GM12878 (cell line): ENCODE measurements at regions of chr16 and their contacts with region 1.

Region 1: DNA sequence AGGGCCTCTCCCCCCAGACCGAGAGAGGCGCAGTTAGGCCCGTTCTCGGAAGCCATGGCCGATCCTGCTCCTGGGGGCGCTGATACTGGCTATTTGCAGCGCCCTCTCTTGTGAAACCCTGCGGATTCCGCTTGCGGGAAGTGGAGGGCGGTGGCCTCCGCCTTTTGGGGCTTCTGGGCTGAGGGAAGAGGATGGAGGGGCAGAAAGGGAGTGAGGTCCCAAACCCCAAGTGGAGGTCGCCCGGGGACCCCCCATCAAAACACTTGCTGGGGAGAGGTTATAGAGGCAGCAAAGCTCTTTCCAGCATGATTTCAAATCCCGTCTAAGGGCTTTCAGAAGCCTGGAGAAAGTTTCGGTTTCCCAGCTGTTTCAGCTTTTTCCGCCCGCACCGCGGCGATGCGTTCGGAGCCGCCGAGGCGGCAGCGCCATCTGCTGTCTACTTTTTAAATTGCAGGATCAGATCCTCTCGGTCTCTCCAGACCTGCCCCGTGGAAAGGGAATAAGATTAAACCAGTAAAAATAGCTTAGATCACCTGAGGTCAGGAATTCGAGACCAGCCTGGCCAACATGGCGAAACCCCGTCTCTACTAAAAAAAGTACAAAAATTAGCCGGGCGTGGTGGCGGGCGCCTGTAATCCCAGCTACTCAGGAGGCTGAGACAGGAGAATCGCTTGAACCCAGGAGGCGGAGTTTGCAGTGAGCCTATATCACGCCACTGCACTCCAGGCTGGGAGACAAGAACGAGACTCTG is 15.8 kb downstream of the SNX20 start:
- DNase-seq: no peak
- ATAC-seq: peak; percentile 68
- H3K4me3 ChIP-seq: no peak overlapping the region
- H3K27ac ChIP-seq: no peak overlapping the region
- H3K4me1 ChIP-seq: peaks cover 19% of the 10 kb centered on the region
- H3K27me3 ChIP-seq: no peaks in the 10 kb centered on the region
- CTCF ChIP-seq: peak; percentile 77 to 91 (median 86)
- EP300 ChIP-seq: no peak
- POLR2A ChIP-seq: no peak
- RAD21 ChIP-seq: peak; percentile 83

Region 2: DNA sequence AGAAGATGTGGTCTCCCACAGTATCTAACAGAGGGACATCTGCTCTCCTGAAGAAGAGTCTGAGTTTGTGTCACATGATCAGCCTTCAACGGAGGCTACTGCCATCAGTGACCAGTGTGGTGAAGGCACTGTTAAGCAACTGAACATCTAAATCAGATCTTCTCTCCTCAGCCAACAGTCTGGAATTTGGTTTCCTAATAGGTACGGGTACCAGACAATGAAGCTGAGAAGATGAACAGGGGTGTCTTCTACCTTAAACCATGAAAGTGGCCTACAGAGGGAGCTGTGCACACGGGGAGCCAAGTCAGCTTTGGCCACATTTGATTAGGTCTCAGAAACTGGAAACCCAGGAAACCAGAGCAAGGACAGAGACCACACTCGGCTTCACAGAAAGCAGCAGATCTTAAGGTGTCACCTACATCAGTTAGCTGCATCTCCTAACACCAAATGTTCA is 338.3 kb before region 1 on chr16:
- CTCF ChIA-PET with region 1: interaction called, 21 read pairs
- POLR2A ChIA-PET with region 1: no interaction called
- RAD21 ChIA-PET with region 1: interaction called, 9 read pairs
- SMC1A ChIA-PET with region 1: interaction called, 14 read pairs
- in situ Hi-C with region 1: no loop called
- intact Hi-C with region 1: loop called (anchors 1 kb)
- DNase-seq: peak; percentile 25
- ATAC-seq: peak; percentile 93
- H3K4me3 ChIP-seq: no peak overlapping the region
- H3K27ac ChIP-seq: no peak overlapping the region; the same call in 1 of the 2 replicates
- H3K4me1 ChIP-seq: peaks cover 3% of the 10 kb centered on the region; the same call in 1 of the 2 replicates
- H3K27me3 ChIP-seq: no peaks in the 10 kb centered on the region
- CTCF ChIP-seq: peak; percentile 45 to 76 (median 55)
- EP300 ChIP-seq: no peak
- POLR2A ChIP-seq: no peak
- RAD21 ChIP-seq: peak; percentile 72

Region 3: GRCh38 chr16:50368410-50369132 is 296.7 kb before region 1 on chr16 and contains the start of gene BRD7:
- CTCF ChIA-PET with region 1: interaction called, 14 read pairs
- POLR2A ChIA-PET with region 1: no interaction called
- RAD21 ChIA-PET with region 1: interaction called, 6 read pairs
- SMC1A ChIA-PET with region 1: interaction called, 4 read pairs
- in situ Hi-C with region 1: no loop called
- intact Hi-C with region 1: no loop called
- DNase-seq: no peak
- ATAC-seq: peak; percentile 82
- H3K4me3 ChIP-seq: peak within 1 kb of the TSS; percentile 91
- H3K27ac ChIP-seq: peak within 1 kb of the TSS; percentile 54
- H3K4me1 ChIP-seq: no peaks in the 10 kb centered on the region; the same call in 1 of the 2 replicates
- H3K27me3 ChIP-seq: no peaks in the 10 kb centered on the region
- CTCF ChIP-seq: peak in 2 of 3 experiments; percentile 42 to 52; a peak in 3 of 6 replicates
- EP300 ChIP-seq: no peak
- POLR2A ChIP-seq: peak; percentile 49; the same call in 1 of the 2 replicates
- RAD21 ChIP-seq: no peak; the same call in 1 of the 2 replicates
- polyA plus RNA-seq, gene BRD7: 16.9 to 36.5 TPM

Region 4: GRCh38 chr16:50653633-50654519 is 11.4 kb before region 1 on chr16:
- CTCF ChIA-PET with region 1: interaction called, 18 read pairs
- POLR2A ChIA-PET with region 1: interaction called, 10 read pairs
- RAD21 ChIA-PET with region 1: no interaction called
- SMC1A ChIA-PET with region 1: interaction called, 3 read pairs
- in situ Hi-C with region 1: no loop called
- intact Hi-C with region 1: no loop called
- DNase-seq: no peak
- ATAC-seq: no peak
- H3K4me3 ChIP-seq: no peak overlapping the region
- H3K27ac ChIP-seq: no peak overlapping the region
- H3K4me1 ChIP-seq: no peaks in the 10 kb centered on the region
- H3K27me3 ChIP-seq: no peaks in the 10 kb centered on the region; a peak in 2 of 4 replicates
- CTCF ChIP-seq: no peak
- EP300 ChIP-seq: no peak
- POLR2A ChIP-seq: no peak
- RAD21 ChIP-seq: no peak

Region 5: DNA sequence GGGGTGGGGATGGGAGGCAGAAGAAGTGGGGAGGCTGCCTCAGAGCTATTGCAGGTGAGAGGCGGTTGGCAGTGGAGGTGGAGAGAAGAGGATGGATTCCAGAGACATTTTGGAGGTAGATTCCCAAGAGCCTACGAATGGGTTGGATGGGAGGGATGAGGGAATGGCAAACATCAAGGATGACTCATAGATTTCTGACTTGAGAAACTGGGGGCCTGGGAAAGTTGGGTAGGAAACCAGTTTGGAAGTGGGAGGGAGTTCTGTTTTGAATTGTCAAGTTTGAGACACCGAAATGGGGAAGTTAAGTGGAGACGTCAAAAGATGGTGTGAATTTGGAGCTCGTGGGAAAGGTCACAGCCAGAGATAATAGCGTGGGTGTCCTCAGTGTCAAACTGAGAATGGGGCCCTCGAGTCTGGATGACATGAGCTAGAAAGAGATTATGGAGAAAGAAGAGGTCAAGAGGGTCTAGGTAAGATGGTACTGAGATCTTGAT is 70.4 kb after region 1 on chr16:
- CTCF ChIA-PET with region 1: interaction called, 35 read pairs
- POLR2A ChIA-PET with region 1: interaction called, 7 read pairs
- RAD21 ChIA-PET with region 1: interaction called, 7 read pairs
- SMC1A ChIA-PET with region 1: interaction called, 17 read pairs
- in situ Hi-C with region 1: no loop called
- intact Hi-C with region 1: no loop called
- DNase-seq: peak; percentile 81
- ATAC-seq: peak; percentile 74
- H3K4me3 ChIP-seq: no peak overlapping the region
- H3K27ac ChIP-seq: peak overlapping the region; percentile 55
- H3K4me1 ChIP-seq: peaks cover 26% of the 10 kb centered on the region
- H3K27me3 ChIP-seq: no peaks in the 10 kb centered on the region
- CTCF ChIP-seq: no peak
- EP300 ChIP-seq: peak; percentile 68 to 83; a peak in 3 of 4 replicates
- POLR2A ChIP-seq: no peak
- RAD21 ChIP-seq: no peak